ENCODE measurements at regions of chr1 and their contacts with region 1.

Region 1: GRCh38 chr1:229258031-229258756 is 12.7 kb upstream of the RAB4A start:
- DNase-seq: peak; percentile 76
- H3K4me3 Mint-ChIP-seq: peak overlapping the region; percentile 33
- H3K27ac Mint-ChIP-seq: peak overlapping the region; percentile 63
- H3K4me1 Mint-ChIP-seq: peaks cover 29% of the 10 kb centered on the region
- H3K27me3 Mint-ChIP-seq: no peaks in the 10 kb centered on the region

Region 2: GRCh38 chr1:229270547-229271447 is 12.6 kb after region 1 on chr1 and contains the start of gene RAB4A:
- CTCF ChIA-PET with region 1: interaction called, 11 read pairs
- POLR2A ChIA-PET with region 1: no interaction called
- DNase-seq: peak; percentile 73
- H3K4me3 Mint-ChIP-seq: peak within 1 kb of the TSS; percentile 92
- H3K27ac Mint-ChIP-seq: peak within 1 kb of the TSS; percentile 91
- H3K4me1 Mint-ChIP-seq: peaks cover 33% of the 10 kb centered on the region
- H3K27me3 Mint-ChIP-seq: peaks cover 3% of the 10 kb centered on the region
- total RNA-seq, gene RAB4A: 35.5 to 41.0 TPM

Region 3: GRCh38 chr1:229479660-229480399 is 221.6 kb after region 1 on chr1:
- CTCF ChIA-PET with region 1: interaction called, 13 read pairs
- POLR2A ChIA-PET with region 1: interaction called, 7 read pairs
- DNase-seq: no peak
- H3K4me3 Mint-ChIP-seq: no peak overlapping the region
- H3K27ac Mint-ChIP-seq: no peak overlapping the region
- H3K4me1 Mint-ChIP-seq: peaks cover 11% of the 10 kb centered on the region
- H3K27me3 Mint-ChIP-seq: no peaks in the 10 kb centered on the region